Heart right ventricle (tissue), 16 donors: ENCODE measurements at regions of chr11 and their contacts with region 1.

Region 1: GRCh38 chr11:62542750-62543567 is 3.6 kb downstream of the AHNAK start:
- DNase-seq: peak; percentile 86 to 88
- ATAC-seq: peak; percentile 26 to 70 (median 44)
- H3K4me3 ChIP-seq: peak overlapping the region; percentile 72 to 100 (median 99)
- H3K27ac ChIP-seq: peak overlapping the region; percentile 98 to 100 (median 100)
- H3K4me1 ChIP-seq: peaks cover 52 to 82% (median 74%) of the 10 kb centered on the region in 9 donors
- H3K27me3 ChIP-seq: peaks cover 0 to 6% (median 0%) of the 10 kb centered on the region in 7 donors
- CTCF ChIP-seq: peak; percentile 30 to 100 (median 100)

Region 2: GRCh38 chr11:62360685-62361084 is 182.3 kb before region 1 on chr11:
- intact Hi-C with region 1: no loop called
- DNase-seq: no peak
- ATAC-seq: peak in 3 of 8 donors; percentile 35 to 47 (median 37)
- H3K4me3 ChIP-seq: peak overlapping the region in 5 of 10 donors; percentile 11 to 32 (median 24)
- H3K27ac ChIP-seq: peak overlapping the region in 7 of 10 donors; percentile 28 to 74 (median 52)
- H3K4me1 ChIP-seq: no peaks in the 10 kb centered on the region
- H3K27me3 ChIP-seq: no peaks in the 10 kb centered on the region
- CTCF ChIP-seq: no peak

Region 3: DNA sequence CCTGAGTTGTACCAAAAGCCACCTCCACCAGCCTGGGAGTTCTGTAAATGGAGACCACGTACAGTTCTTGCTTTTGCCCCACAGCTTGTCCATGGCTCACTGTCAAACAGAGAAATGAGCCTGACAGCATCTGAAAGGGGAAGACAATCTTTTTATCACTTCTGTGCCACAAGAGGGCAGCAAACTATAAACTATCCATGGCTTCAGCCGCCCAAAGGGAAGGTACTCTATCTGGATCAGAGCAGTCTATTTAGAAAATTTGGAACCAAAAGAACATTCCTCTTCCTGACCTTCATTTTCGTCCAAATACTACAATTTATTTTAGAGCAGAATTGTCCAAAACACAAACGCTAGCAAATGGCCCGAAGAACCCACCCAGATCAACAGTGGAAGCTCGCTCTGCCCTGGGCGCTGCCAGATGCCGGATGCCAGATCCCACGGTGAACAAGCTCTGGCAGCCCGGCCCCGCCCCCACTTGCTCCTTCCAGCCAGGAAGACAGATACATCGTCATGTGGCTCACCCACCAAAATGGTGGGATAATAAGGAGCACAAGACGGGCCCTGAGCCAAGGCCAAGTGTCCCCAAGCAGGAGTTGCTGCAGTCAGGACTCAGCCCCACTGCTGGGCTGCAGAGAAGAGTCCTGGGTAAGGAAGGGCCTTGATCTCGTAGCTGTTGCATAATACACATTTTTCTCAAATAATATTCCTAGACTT is 148.0 kb before region 1 on chr11:
- intact Hi-C with region 1: loop called in 4 of 10 experiments (anchors 2 to 10 kb)
- DNase-seq: peak; percentile 81 to 82
- ATAC-seq: peak; percentile 77 to 88 (median 84)
- H3K4me3 ChIP-seq: peak overlapping the region in 9 of 10 donors; percentile 25 to 55 (median 48)
- H3K27ac ChIP-seq: peak overlapping the region; percentile 38 to 84 (median 74)
- H3K4me1 ChIP-seq: peaks cover 21 to 54% (median 39%) of the 10 kb centered on the region in 9 donors
- H3K27me3 ChIP-seq: no peaks in the 10 kb centered on the region
- CTCF ChIP-seq: peak; percentile 59 to 86 (median 74)

Region 4: DNA sequence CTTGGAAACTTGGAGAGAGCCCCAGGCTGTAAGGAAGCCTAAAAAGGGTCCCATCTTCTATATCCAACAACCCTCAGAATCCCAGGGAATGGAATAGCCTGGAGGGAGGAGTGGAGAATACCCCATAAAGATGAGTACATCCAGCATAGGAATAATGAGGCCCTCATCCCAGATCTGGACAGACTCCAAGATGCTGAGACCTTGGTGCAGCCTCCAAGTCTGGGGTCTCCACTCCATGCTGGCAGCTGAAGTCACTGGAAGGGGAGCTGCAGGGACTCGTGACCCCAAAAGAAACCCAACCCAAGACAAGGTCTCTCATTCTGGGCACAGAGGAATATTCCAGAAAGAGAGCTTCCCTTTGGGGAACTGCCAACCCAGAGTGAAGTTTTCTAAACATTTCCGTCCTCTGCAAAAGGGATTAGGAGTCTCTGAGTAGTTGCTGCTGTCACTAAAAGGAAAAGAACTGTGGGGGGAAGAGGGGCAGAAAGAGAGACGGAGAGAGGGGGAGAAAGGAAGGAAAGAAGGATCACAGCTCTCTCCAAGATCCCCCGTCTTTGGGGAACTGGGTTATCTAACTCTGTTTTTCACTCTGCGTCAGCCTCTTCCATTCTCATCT is 123.5 kb before region 1 on chr11:
- intact Hi-C with region 1: loop called in 9 of 10 experiments (anchors 1 to 5 kb)
- DNase-seq: no peak
- ATAC-seq: peak in 4 of 8 donors; percentile 38 to 52 (median 48)
- H3K4me3 ChIP-seq: no peak overlapping the region
- H3K27ac ChIP-seq: peak overlapping the region in 9 of 10 donors; percentile 5 to 77 (median 46)
- H3K4me1 ChIP-seq: peaks cover 0 to 18% (median 10%) of the 10 kb centered on the region in 9 donors
- H3K27me3 ChIP-seq: no peaks in the 10 kb centered on the region
- CTCF ChIP-seq: no peak

Region 5: GRCh38 chr11:62444236-62444833 is 98.6 kb before region 1 on chr11:
- intact Hi-C with region 1: loop called in 1 of 10 experiments (anchors 5 kb)
- DNase-seq: peak; percentile 61 to 79
- ATAC-seq: peak; percentile 49 to 74 (median 61)
- H3K4me3 ChIP-seq: peak overlapping the region in 9 of 10 donors; percentile 27 to 56 (median 52)
- H3K27ac ChIP-seq: peak overlapping the region; percentile 44 to 91 (median 83)
- H3K4me1 ChIP-seq: peaks cover 23 to 60% (median 46%) of the 10 kb centered on the region in 9 donors
- H3K27me3 ChIP-seq: no peaks in the 10 kb centered on the region
- CTCF ChIP-seq: no peak

Region 6: DNA sequence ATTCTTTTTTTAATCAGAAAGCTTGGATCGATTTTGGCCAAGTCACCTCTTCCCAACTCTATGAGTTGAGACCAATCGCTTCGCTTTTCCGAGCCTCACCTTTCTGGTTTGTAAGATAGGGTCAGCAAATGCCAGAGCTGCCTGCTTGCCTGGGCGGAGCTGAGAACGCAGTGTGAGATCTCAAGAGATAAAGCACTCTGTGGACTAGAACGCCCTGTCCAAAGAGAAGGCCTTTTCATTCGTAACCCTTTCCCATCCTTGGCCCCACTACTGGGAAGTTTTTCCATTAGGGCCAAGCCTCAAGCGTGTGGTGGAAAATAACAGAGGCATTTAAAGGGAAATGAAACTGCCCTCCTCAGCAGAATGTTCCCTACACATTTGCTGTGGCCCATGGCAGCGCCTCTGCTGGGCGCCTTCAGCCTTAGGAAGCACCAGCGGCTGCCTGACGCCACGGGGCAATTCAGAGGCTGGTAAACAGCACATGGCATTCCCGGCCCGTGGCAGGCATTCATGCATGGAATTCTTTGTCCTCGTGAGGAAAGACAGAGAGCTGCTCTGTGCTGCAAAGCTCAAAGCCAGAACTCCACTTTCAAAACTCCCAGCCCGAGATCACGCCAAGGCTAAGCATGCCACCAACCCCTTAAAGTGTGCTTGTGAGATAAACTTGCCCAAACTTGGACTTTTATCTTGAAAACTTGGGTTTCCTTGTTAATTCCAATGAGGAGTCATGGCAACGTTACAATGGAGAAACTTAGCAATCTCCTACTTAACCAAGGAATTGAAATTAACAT is 34.5 kb before region 1 on chr11:
- intact Hi-C with region 1: loop called in 7 of 10 experiments (anchors 1 to 5 kb)
- DNase-seq: peak; percentile 76 to 80
- ATAC-seq: peak; percentile 78 to 93 (median 89)
- H3K4me3 ChIP-seq: peak overlapping the region in 4 of 10 donors; percentile 19 to 29 (median 21)
- H3K27ac ChIP-seq: peak overlapping the region; percentile 1 to 89 (median 76)
- H3K4me1 ChIP-seq: peaks cover 7 to 67% (median 45%) of the 10 kb centered on the region in 9 donors
- H3K27me3 ChIP-seq: no peaks in the 10 kb centered on the region
- CTCF ChIP-seq: peak; percentile 6 to 71 (median 45)

Region 7: DNA sequence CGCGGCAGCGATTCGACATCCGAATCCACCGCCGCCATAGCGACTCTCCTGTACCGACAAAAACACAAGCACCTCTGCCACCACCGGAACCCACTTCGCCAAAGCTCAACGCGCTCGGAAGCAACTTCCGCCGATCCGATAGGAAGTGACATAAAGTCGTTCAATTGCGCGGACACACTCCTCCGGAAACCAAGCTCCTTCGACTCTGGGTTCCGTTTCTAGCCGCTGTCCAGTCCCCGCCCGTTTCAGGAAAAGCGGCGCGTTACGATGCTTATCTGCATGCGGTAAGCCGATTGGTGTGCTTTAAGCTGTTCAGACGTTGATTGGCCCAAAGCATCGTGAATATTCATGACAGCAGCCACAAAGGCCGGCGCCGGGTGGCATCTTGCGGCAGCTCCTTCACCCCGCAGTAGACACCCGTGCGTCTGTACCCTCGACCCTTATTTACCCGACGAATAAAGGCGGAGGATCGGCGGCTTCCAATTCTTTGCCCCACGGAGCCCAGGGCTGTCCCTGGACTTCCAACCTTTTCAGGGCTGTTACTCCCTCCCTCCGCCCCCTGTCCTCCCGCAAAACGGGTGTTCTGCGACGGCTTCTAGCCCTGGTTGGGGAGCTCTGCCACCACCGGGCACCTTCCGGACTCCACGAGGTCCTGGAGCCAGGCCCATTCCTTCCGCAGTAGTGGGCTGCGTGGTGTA is 48.6 kb after region 1 on chr11 and contains the start of gene TUT1:
- intact Hi-C with region 1: loop called in 2 of 10 experiments (anchors 1 to 5 kb)
- DNase-seq: peak; percentile 91 to 97
- ATAC-seq: peak; percentile 95 to 98 (median 96)
- H3K4me3 ChIP-seq: peak within 1 kb of the TSS; percentile 63 to 86 (median 78)
- H3K27ac ChIP-seq: peak within 1 kb of the TSS; percentile 83 to 97 (median 94)
- H3K4me1 ChIP-seq: peaks cover 3 to 42% (median 28%) of the 10 kb centered on the region in 9 donors
- H3K27me3 ChIP-seq: no peaks in the 10 kb centered on the region
- CTCF ChIP-seq: peak in 5 of 9 donors; percentile 5 to 39 (median 24)
- total RNA-seq, gene TUT1: 8.2 to 17.9 (median 12.3) TPM